ENCODE measurements at regions of chr9 and their contacts with region 1.

Region 1: GRCh38 chr9:111016426-111017045 is 21.7 kb downstream of the LPAR1 start:
- DNase-seq: no peak
- H3K4me3 ChIP-seq: peak overlapping the region in 1 of 59 donors; percentile 9
- H3K27ac ChIP-seq: peak overlapping the region in 21 of 59 donors; percentile 13 to 66 (median 32)
- H3K27me3 ChIP-seq: no peaks in the 10 kb centered on the region
- CTCF ChIP-seq: no peak

Region 2: GRCh38 chr9:110874963-110875674 is 141.4 kb before region 1 on chr9:
- intact Hi-C with region 1: loop called in 1 of 2 experiments (anchors 10 kb)
- DNase-seq: peak in 7 of 10 donors; percentile 23 to 51 (median 36)
- H3K4me3 ChIP-seq: no peak overlapping the region
- H3K27ac ChIP-seq: peak overlapping the region in 5 of 59 donors; percentile 4 to 47 (median 37)
- H3K27me3 ChIP-seq: no peaks in the 10 kb centered on the region
- CTCF ChIP-seq: peak in 13 of 56 donors; percentile 11 to 37 (median 19)

Measured in dorsolateral prefrontal cortex (tissue), 120 donors.